ENCODE measurements at regions of chr17 and their contacts with region 1.

Region 1: GRCh38 chr17:78112518-78113226 is 15.9 kb downstream of the TMC6 start:
- DNase-seq: peak in 1 of 2 donors; percentile 84
- ATAC-seq: peak; percentile 79

Region 2: DNA sequence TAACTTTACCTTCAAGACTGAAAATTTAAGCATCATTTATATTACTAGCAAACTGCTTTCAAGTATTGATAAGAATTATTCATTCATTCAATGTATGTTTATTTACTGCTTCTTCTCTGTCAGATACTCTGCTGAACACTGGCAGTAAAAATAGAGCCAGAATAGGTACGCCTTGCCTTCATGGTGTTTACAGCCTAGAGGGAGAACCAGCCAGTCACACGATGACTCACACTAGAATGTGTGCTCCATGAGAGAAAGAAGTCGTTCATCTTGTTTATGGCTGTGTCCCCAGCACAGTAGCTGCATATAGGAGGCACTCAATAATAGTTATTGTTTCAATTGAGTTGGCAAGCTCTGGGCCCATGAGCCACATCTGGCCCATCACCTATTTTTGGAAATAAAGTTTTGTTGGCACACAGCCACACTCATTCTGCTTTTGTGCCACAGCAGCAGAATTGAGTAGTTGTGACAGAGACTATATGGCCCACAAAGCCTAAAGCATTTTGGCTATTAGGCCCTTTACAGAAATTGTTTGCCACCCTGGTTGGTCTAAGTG is 68.3 kb before region 1 on chr17:
- intact Hi-C with region 1: no loop called
- DNase-seq: no peak
- ATAC-seq: no peak

Region 3: GRCh38 chr17:78176548-78177025 is 63.9 kb after region 1 on chr17:
- intact Hi-C with region 1: loop called (anchors 5 to 10 kb)
- DNase-seq: peak; percentile 68 to 87
- ATAC-seq: peak; percentile 31

Region 4: DNA sequence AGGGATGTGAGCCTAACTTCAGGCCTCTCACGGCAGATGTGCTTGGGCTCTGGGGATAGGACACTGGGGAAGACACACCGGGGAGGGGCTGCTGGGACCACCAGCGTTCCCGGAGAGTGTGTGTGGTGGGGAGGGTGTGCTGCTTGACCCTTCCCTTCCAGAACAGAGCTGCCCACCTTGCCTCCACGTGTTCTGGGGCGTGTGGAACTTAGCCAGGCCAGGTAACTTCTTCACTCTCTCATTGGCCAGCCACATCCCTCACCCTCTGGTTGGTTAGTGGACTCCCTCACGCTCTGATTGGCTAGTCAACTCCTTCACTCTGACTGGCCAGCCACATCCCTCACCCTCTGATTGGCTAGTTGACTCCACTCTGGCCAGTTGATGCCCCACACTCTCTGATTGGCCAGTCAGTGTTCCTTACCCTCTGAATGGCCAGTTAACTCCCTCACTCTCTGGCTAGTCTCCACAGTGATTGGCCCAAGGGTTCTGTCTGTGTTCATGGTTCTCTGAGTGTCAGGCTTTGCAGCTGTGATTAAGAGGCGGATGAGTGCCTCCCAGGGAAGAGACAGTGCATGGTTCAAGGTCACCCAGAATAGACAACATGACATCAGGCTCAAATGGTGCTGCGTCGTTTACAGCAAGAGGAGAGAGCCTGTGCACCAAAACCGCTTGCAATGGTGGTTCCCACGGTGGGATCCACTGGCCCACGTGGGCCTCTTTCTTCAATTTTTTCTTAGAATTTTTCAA is 128.8 kb after region 1 on chr17:
- intact Hi-C with region 1: loop called in 1 of 2 experiments (anchors 10 kb)
- DNase-seq: no peak
- ATAC-seq: peak; percentile 27

Measured in left colon (tissue), 2 donors.